Gastrocnemius medialis (tissue), 4 donors: ENCODE measurements at regions of chr4 and their contacts with region 1.

Region 1: DNA sequence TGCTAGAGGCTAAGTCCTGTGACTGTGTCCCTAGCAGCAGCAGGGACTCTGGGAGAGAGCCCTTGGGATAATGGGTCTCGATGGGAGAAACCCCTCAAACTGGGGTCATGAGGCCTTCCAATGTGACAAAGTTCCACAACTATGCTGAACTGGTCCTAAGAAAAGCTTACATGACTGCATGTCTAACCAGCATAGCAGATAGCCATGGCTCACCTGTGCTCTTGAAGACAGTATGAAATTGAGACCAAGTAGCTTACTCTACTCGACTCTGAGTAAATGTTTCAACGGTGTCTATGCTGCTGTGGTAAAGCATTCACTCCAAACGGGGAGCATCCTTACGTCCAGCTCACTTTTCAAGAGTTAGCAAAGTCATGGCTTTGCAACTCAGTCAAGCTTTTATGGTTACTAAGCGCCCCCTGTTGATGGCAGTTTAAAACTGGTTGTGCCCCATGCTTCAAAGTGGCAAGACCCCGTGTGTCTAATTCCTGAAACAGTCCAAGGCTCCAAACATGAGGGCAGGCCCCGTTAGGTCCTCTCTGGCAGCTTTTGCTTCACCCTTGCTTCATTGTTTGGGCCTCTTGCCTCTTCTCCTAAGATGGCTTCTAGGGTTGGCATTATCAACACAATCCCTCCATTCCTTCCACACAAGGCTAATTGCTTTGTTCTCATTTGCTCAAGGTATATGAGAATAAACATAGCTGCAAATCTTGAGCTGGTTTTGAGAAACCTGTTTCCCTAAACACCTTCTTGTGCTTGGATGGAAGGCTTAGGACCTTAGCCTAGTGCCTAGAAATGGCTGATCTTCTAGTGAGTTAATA is 46.6 kb downstream of the CCNG2 start:
- DNase-seq: peak; percentile 38 to 44
- ATAC-seq: peak; percentile 84 to 88
- H3K4me3 ChIP-seq: no peak overlapping the region
- H3K27ac ChIP-seq: no peak overlapping the region
- H3K4me1 ChIP-seq: no peaks in the 10 kb centered on the region
- H3K27me3 ChIP-seq: no peaks in the 10 kb centered on the region
- CTCF ChIP-seq: peak; percentile 68 to 77 (median 72)
- POLR2A ChIP-seq: no peak

Region 2: GRCh38 chr4:76515975-76516843 is 687.4 kb before region 1 on chr4:
- in situ Hi-C with region 1: loop called (anchors 10 to 25 kb)
- intact Hi-C with region 1: loop called (anchors 1 kb)
- DNase-seq: no peak
- ATAC-seq: no peak
- H3K4me3 ChIP-seq: no peak overlapping the region
- H3K27ac ChIP-seq: no peak overlapping the region
- H3K4me1 ChIP-seq: no peaks in the 10 kb centered on the region
- H3K27me3 ChIP-seq: no peaks in the 10 kb centered on the region
- CTCF ChIP-seq: no peak
- POLR2A ChIP-seq: no peak

Region 3: DNA sequence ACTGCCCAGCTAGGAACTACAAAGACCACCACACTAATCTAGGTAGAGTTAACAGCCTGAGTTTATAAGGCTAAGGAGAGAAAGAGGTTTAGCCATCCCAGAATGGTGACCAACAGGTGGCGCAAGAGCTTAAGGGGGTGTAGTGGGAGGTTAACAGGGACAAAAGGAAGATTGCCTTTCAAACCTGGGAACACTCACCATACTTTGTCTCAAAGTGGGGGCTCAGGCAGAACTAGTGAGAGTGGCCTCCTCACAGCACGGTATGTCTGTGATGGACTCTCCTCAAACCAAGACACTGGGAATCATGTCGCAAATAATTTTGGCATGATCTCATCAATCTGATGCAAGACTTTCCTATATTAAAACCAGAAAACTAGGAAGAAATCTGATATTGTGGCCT is 151.2 kb before region 1 on chr4:
- in situ Hi-C with region 1: no loop called
- intact Hi-C with region 1: loop called (anchors 5 kb)
- DNase-seq: no peak
- ATAC-seq: peak in 1 of 2 donors; percentile 51
- H3K4me3 ChIP-seq: no peak overlapping the region
- H3K27ac ChIP-seq: peak overlapping the region in 1 of 4 donors; percentile 36
- H3K4me1 ChIP-seq: peaks cover 0 to 13% of the 10 kb centered on the region in 2 donors
- H3K27me3 ChIP-seq: no peaks in the 10 kb centered on the region
- CTCF ChIP-seq: peak; percentile 12 to 51 (median 25)
- POLR2A ChIP-seq: no peak

Region 4: GRCh38 chr4:77095101-77095821 is 108.3 kb before region 1 on chr4:
- in situ Hi-C with region 1: loop called in 3 of 4 experiments (anchors 5 to 10 kb)
- intact Hi-C with region 1: loop called (anchors 2 kb)
- DNase-seq: peak; percentile 54 to 72
- ATAC-seq: peak; percentile 82 to 96
- H3K4me3 ChIP-seq: no peak overlapping the region
- H3K27ac ChIP-seq: no peak overlapping the region
- H3K4me1 ChIP-seq: peaks cover 0 to 10% of the 10 kb centered on the region in 2 donors
- H3K27me3 ChIP-seq: no peaks in the 10 kb centered on the region
- CTCF ChIP-seq: peak; percentile 72 to 85 (median 78)
- POLR2A ChIP-seq: no peak

Region 5: GRCh38 chr4:78749972-78750727 is 1546.6 kb after region 1 on chr4:
- in situ Hi-C with region 1: no loop called
- intact Hi-C with region 1: no loop called
- DNase-seq: no peak
- ATAC-seq: no peak
- H3K4me3 ChIP-seq: no peak overlapping the region
- H3K27ac ChIP-seq: no peak overlapping the region
- H3K4me1 ChIP-seq: peaks cover 7 to 14% of the 10 kb centered on the region in 2 donors
- H3K27me3 ChIP-seq: no peaks in the 10 kb centered on the region
- CTCF ChIP-seq: no peak
- POLR2A ChIP-seq: no peak